A549 (cell line): ENCODE measurements at regions of chr5 and their contacts with region 1.

Region 1: GRCh38 chr5:123199527-123199926 is 110.5 kb downstream of the PRDM6 start:
- DNase-seq: no peak
- ATAC-seq: no peak
- H3K4me3 ChIP-seq: no peak overlapping the region
- H3K27ac ChIP-seq: no peak overlapping the region
- H3K4me1 ChIP-seq: no peaks in the 10 kb centered on the region
- CTCF ChIP-seq: no peak
- EP300 ChIP-seq: no peak
- POLR2A ChIP-seq: no peak
- RAD21 ChIP-seq: no peak

Region 2: DNA sequence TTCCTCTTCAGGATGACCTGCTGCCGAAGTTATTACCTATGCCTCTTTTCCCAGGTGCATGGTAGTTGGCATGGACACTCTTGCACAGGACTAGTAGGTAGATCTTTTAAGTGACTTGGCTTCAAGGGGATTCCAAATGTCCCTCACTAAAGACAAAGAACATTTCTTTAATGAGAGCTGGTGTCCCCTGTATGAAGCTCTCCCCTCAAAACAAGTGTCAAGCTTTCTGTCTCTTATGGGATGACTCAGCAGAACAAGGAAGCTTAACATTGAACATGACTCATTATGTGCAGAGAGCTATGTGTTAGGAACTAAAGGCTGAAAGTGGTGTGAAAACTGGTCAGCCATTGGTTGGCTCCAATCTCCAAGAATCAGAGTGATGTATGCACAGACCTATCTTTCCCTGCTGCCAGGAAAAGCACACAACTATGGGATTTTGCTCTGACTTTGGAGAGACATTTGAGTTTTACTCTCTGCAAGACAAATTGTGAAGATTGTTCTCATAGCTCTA is 10.0 kb after region 1 on chr5:
- CTCF ChIA-PET with region 1: interaction called, 11 read pairs
- POLR2A ChIA-PET with region 1: no interaction called
- DNase-seq: peak; percentile 52 to 84
- ATAC-seq: peak; percentile 95 to 98
- H3K4me3 ChIP-seq: no peak overlapping the region
- H3K27ac ChIP-seq: peak overlapping the region; percentile 48 to 76
- H3K4me1 ChIP-seq: peaks cover 13% of the 10 kb centered on the region
- CTCF ChIP-seq: no peak
- EP300 ChIP-seq: no peak
- POLR2A ChIP-seq: no peak
- RAD21 ChIP-seq: no peak

Region 3: DNA sequence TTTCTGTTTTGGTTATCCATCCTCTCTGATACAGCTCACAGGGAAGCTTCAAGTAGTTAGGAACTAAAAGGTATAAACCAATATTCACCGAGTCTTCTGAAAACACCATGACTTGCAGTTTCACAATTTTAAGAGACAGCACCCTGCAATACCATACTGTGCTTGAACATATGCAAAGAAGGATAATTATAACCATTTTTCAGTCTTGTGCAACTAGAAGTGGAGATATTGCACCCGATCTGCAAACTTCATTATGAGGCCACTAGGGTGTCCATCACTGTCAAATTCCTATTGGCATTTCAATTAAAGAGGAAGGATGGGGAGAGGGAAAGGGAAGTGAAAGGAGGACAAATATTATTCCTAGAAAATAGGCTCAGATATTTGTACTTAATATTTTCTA is 256.1 kb after region 1 on chr5:
- CTCF ChIA-PET with region 1: no interaction called
- POLR2A ChIA-PET with region 1: no interaction called
- DNase-seq: no peak
- ATAC-seq: no peak
- H3K4me3 ChIP-seq: no peak overlapping the region
- H3K27ac ChIP-seq: no peak overlapping the region
- H3K4me1 ChIP-seq: peaks cover 16% of the 10 kb centered on the region
- CTCF ChIP-seq: no peak
- EP300 ChIP-seq: no peak
- POLR2A ChIP-seq: no peak
- RAD21 ChIP-seq: no peak